Ovary (tissue), 10 donors: ENCODE measurements at regions of chr6 and their contacts with region 1.

Region 1: DNA sequence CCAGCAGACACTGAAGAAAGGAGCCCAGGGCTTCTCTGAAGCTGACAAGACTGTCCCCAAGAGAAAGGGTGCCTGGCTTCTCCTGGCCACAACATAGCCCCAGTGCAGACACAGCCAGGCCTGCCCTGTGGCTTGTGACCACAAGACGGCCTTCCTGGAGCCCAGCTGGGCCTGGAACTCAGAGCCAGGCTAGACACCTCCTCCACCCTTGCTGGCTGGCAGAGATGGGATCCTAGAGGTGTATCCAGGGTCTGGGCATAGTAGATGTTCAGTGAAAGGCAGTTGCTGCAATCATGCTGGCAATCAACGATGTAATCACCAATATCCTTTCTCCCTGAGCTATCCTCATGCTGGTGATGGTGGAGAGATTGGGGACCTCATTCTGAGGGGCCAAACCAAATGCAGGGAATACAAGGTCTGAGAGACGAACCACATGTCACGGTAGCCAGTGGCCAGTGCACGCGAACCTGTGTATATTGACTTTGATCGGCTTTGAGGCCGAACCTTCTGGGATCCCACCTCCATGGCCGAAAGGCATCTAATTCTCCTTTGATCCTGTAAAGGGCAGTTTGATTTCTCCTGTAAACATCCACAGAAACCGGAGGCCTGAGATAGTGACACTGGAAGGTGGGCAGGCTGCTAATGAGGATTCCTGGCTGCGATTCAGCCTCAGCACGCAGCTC is 115.2 kb downstream of the PSMB1 start:
- DNase-seq: peak in 1 of 5 donors; percentile 3
- H3K4me3 ChIP-seq: peak overlapping the region; percentile 1
- H3K27ac ChIP-seq: no peak overlapping the region
- H3K4me1 ChIP-seq: no peaks in the 10 kb centered on the region
- H3K27me3 ChIP-seq: no peaks in the 10 kb centered on the region
- CTCF ChIP-seq: no peak
- EP300 ChIP-seq: no peak
- POLR2A ChIP-seq: no peak

Region 2: DNA sequence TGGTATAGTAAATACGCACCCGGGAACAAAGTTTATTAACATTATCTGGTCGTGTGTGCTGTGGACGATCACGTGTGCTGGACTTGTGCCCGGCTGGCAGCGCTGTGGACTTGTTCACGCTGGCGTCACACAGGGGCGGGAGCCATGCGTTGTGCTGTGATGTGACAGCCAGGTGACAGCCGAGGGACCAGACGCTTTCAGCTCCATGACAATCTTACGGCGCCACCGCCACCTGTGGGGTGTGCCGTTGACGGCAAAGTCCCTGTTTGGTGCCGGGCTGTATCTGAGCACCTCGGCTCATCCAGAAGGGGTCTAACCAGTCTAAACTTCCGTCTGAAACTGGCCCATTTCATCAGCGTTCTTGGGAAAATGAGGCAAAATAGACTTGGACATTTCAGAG is 172.2 kb before region 1 on chr6:
- intact Hi-C with region 1: no loop called
- DNase-seq: no peak
- H3K4me3 ChIP-seq: no peak overlapping the region
- H3K27ac ChIP-seq: no peak overlapping the region
- H3K4me1 ChIP-seq: no peaks in the 10 kb centered on the region
- H3K27me3 ChIP-seq: no peaks in the 10 kb centered on the region
- CTCF ChIP-seq: no peak
- EP300 ChIP-seq: no peak
- POLR2A ChIP-seq: no peak

Region 3: DNA sequence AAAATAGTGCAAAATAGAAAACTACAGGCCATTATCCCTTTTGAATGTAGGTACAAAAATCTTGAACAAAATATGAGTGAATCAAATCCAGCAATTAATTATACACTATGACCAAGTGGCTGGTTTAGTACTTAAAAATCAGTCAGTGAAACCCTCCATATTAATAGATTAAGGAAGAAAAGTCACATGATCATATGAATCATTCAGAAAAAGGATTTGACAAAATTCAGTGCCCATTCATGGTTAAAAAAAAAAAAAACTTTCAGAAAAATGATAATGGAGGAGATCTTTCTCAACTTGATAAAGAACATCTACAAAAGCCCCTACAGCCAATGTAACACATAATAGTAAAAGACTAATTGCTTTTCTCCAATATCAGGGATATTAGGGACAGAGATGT is 56.3 kb before region 1 on chr6:
- intact Hi-C with region 1: loop called in 1 of 4 experiments (anchors 2 kb)
- DNase-seq: no peak
- H3K4me3 ChIP-seq: no peak overlapping the region
- H3K27ac ChIP-seq: no peak overlapping the region
- H3K4me1 ChIP-seq: no peaks in the 10 kb centered on the region
- H3K27me3 ChIP-seq: no peaks in the 10 kb centered on the region
- CTCF ChIP-seq: no peak
- EP300 ChIP-seq: no peak
- POLR2A ChIP-seq: no peak

Region 4: GRCh38 chr6:170410241-170410640 is 27.6 kb before region 1 on chr6:
- intact Hi-C with region 1: loop called in 1 of 4 experiments (anchors 2 kb)
- DNase-seq: no peak
- H3K4me3 ChIP-seq: no peak overlapping the region
- H3K27ac ChIP-seq: no peak overlapping the region
- H3K4me1 ChIP-seq: no peaks in the 10 kb centered on the region
- H3K27me3 ChIP-seq: no peaks in the 10 kb centered on the region
- CTCF ChIP-seq: no peak
- EP300 ChIP-seq: no peak
- POLR2A ChIP-seq: no peak